K562 (cell line): ENCODE measurements at regions of chr12 and their contacts with region 1.

Region 1: DNA sequence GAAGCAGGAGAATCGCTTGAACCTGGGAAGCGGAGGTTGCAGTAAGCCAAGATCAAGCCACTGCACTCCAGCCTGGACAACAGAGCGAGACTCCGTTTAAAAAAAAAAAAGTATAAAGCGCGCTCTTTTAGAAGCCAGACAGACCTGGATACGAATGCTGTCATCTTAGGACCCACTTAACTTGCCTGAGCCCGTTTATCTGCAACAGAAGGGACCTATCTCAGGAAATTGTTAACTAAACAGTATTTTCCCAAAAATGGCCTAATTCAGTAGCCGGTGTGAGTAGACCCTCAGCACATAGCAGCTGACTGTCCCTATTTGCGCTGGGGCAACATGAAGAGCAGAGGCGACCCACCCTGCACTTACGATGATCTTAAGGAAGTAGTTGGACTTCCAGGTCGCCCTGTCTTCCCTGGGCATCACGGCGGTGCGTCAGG is 529 bp downstream of the RPLP0 start:
- DNase-seq: no peak
- ATAC-seq: no peak
- H3K4me3 ChIP-seq: peak overlapping the region; percentile 84
- H3K27ac ChIP-seq: peak overlapping the region; percentile 92
- H3K4me1 ChIP-seq: peaks cover 6 to 29% of the 10 kb centered on the region in 2 experiments; a peak in 4 of 5 replicates
- H3K27me3 ChIP-seq: no peaks in the 10 kb centered on the region
- CTCF ChIP-seq: no peak
- EP300 ChIP-seq: no peak
- POLR2A ChIP-seq: no peak
- RAD21 ChIP-seq: no peak

Region 2: DNA sequence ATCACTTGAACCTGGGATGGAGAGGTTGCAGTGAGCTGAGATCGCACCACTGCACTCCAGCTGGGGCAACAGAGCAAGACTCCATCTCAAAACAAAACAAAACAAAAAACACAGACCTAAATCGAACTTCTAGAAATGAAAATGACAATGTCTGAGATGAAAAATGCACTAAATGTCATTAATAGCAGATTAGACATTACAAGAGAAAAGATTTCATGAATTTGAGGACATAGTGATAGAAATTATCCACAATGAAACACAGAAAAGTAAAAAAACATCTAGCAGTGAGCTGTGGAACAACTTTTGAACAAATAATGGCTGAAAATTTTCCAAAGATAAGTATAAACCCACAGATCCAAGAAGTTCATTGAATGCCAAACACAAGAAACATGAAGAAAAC is 176.2 kb before region 1 on chr12:
- CTCF ChIA-PET with region 1: no interaction called
- POLR2A ChIA-PET with region 1: no interaction called
- in situ Hi-C with region 1: no loop called
- intact Hi-C with region 1: no loop called
- DNase-seq: no peak
- ATAC-seq: no peak
- H3K4me3 ChIP-seq: no peak overlapping the region
- H3K27ac ChIP-seq: no peak overlapping the region
- H3K4me1 ChIP-seq: no peaks in the 10 kb centered on the region
- H3K27me3 ChIP-seq: peaks cover 4 to 7% of the 10 kb centered on the region in 2 experiments; a peak in 3 of 5 replicates
- CTCF ChIP-seq: no peak
- EP300 ChIP-seq: no peak
- POLR2A ChIP-seq: no peak
- RAD21 ChIP-seq: no peak

Region 3: GRCh38 chr12:120242275-120242799 is 42.0 kb after region 1 on chr12:
- CTCF ChIA-PET with region 1: no interaction called
- POLR2A ChIA-PET with region 1: interaction called, 63 read pairs
- in situ Hi-C with region 1: no loop called
- intact Hi-C with region 1: no loop called
- DNase-seq: peak; percentile 76 to 95 (median 86)
- ATAC-seq: peak; percentile 97
- H3K4me3 ChIP-seq: no peak overlapping the region
- H3K27ac ChIP-seq: no peak overlapping the region
- H3K4me1 ChIP-seq: peaks cover 30 to 31% of the 10 kb centered on the region in 2 experiments
- H3K27me3 ChIP-seq: no peaks in the 10 kb centered on the region
- CTCF ChIP-seq: no peak
- EP300 ChIP-seq: peak; percentile 85
- POLR2A ChIP-seq: no peak
- RAD21 ChIP-seq: peak in 1 of 2 experiments; percentile 37; a peak in 2 of 4 replicates